ENCODE measurements at regions of chr12 and their contacts with region 1.

Region 1: DNA sequence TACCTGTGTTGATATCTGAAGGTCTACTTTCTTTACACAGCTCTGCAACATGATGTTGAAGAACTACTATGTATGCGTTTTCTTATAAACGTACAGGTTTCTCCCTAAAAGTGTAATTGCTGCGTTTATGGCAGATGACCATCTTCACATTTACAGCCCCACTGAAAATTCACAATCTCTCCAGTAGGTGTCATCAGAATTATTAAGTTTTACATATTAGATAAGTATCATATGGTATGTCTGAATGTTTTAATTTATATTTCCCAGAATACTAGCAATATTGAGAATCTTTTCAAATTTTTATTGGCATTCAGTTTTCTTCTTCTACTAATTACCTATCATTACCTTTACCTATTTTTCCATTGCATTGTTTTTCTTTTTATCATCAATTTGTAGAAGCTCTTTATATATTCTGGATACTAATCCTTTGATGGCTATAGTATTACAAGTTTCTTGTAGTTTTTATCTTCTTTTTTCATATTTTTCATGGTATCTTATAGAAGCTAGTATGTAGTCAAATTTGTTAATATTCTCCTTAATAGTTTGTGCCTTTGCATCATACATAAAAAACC is 123.5 kb downstream of the CAPZA3 start:
- DNase-seq: peak; percentile 26
- H3K4me3 ChIP-seq: no peak overlapping the region
- H3K27ac ChIP-seq: no peak overlapping the region
- H3K4me1 ChIP-seq: peaks cover 15% of the 10 kb centered on the region
- H3K27me3 ChIP-seq: no peaks in the 10 kb centered on the region
- CTCF ChIP-seq: peak; percentile 56 to 76

Region 2: DNA sequence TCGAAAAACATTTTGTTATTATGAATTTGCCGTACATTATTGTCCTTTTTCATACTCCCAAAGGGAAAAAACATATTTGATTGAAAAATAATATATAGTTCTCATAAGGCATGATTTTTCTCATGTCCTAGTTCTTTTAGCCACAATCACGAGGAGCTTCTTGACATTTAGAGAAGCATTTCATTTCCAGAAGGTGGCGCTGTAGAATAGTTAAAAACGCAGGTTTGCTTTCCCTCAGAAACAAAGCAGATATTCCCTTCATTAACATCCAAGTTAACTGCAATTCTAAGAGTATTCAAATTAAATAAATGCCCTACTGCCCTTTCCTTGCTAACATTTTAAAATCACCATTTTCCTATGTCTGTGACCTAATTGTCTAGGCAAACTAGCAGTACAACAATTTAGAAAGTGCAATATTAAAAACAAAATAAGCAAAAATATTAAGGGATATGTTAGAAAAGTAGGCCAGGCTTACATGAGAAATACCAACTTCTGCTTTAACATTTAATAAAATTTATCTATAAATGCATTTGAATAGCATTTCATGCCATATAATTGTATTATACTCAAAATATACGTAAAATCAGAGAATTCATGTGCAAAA is 611.0 kb before region 1 on chr12:
- CTCF ChIA-PET with region 1: no interaction called
- dilution Hi-C with region 1: no loop called
- in situ Hi-C with region 1: loop called in 1 of 2 experiments (anchors 25 kb)
- intact Hi-C with region 1: loop called (anchors 10 kb)
- DNase-seq: peak; percentile 58
- H3K4me3 ChIP-seq: no peak overlapping the region
- H3K27ac ChIP-seq: no peak overlapping the region
- H3K4me1 ChIP-seq: peaks cover 4% of the 10 kb centered on the region
- H3K27me3 ChIP-seq: no peaks in the 10 kb centered on the region
- CTCF ChIP-seq: peak; percentile 70 to 72

Region 3: GRCh38 chr12:18683327-18684013 is 177.9 kb before region 1 on chr12:
- CTCF ChIA-PET with region 1: no interaction called
- dilution Hi-C with region 1: no loop called
- in situ Hi-C with region 1: no loop called
- intact Hi-C with region 1: no loop called
- DNase-seq: peak; percentile 77
- H3K4me3 ChIP-seq: no peak overlapping the region
- H3K27ac ChIP-seq: peak overlapping the region; percentile 77
- H3K4me1 ChIP-seq: peaks cover 12% of the 10 kb centered on the region
- H3K27me3 ChIP-seq: no peaks in the 10 kb centered on the region
- CTCF ChIP-seq: no peak

Region 4: DNA sequence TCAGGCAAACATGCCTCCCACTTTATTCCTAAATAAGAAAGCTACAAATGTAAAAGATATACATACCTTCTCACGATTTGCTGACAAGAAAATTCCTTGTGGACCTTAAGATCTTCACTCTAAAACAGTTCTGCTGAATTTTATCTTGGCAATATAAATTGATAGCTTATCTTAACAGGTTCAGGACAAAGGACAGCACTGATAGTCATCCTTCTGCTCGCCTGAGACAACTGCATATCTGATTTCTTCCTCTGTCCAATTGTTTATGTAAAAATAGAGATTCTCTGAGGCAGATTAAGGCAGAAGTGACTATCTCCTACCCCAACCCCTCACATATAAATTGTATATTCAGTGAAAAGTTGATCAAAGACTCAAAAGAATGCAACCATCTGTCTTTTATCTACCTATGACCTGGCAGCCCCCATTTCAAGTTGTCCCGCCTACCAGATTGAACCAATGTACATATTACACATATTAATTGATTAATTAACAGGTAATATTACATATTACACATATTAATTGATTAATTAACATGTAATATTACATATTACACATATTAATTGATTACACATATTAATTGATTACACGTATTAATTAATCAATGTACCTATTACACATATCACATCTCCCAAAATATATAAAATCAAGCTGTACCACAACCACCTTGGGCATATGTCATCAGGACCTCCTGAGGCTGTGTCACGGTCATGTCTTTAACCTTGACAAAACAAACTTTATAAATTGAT is 78.4 kb before region 1 on chr12:
- CTCF ChIA-PET with region 1: no interaction called
- dilution Hi-C with region 1: no loop called
- in situ Hi-C with region 1: no loop called
- intact Hi-C with region 1: no loop called
- DNase-seq: no peak
- H3K4me3 ChIP-seq: no peak overlapping the region
- H3K27ac ChIP-seq: no peak overlapping the region
- H3K4me1 ChIP-seq: no peaks in the 10 kb centered on the region
- H3K27me3 ChIP-seq: no peaks in the 10 kb centered on the region
- CTCF ChIP-seq: no peak

Region 5: GRCh38 chr12:18895540-18896325 is 34.4 kb after region 1 on chr12:
- CTCF ChIA-PET with region 1: no interaction called
- dilution Hi-C with region 1: no loop called
- in situ Hi-C with region 1: no loop called
- intact Hi-C with region 1: no loop called
- DNase-seq: no peak
- H3K4me3 ChIP-seq: no peak overlapping the region
- H3K27ac ChIP-seq: no peak overlapping the region
- H3K4me1 ChIP-seq: no peaks in the 10 kb centered on the region
- H3K27me3 ChIP-seq: no peaks in the 10 kb centered on the region
- CTCF ChIP-seq: no peak

Region 6: DNA sequence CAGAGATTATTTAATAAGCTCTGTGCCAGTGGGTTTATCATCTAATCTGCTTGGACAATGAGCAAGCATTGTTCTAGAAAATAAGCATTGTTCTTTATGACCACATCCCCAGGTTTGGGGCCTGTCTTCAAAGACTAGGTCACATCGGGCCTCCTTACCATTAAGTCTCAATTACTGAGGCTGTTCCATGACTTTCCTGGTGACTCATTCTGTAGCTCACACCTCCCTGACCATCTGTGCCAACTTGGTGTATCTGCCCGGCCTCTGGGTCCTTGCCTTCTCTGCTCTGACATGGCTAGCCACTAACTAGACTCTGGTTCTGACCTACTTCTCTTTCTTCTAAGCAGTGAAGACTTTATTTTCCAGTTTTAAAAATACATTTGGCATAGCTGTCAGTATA is 223.7 kb after region 1 on chr12:
- CTCF ChIA-PET with region 1: no interaction called
- dilution Hi-C with region 1: no loop called
- in situ Hi-C with region 1: no loop called
- intact Hi-C with region 1: no loop called
- DNase-seq: peak; percentile 51
- H3K4me3 ChIP-seq: no peak overlapping the region
- H3K27ac ChIP-seq: no peak overlapping the region
- H3K4me1 ChIP-seq: peaks cover 8% of the 10 kb centered on the region
- H3K27me3 ChIP-seq: no peaks in the 10 kb centered on the region
- CTCF ChIP-seq: no peak

Region 7: DNA sequence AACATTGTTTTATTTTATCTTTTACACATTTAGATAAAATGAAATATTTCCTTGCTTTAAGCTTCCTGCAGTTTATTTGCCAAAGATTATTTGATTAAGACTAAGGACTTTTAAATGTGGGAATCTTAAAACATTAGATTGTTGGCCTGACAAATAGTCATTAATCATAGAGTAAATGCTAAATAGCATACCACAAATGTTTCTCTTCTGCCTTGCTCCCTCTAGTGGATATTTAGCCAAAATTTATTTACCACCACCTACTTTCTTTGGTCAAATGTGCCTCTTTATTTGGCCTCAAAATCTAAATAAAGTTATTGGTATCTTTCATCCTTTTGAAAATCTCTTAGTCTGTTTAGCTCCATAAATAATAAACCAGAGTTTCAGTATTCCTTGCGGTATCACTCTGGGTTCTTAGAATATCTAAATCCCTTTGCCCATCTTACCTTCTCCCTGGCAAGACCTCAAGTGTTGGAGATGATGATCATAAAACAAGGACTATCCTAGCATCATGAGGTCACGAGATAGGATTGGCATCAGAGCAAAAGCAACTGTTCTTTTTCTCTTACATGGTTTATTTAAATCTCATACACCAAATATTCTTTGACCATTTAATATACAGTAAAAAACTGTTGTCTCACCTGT is 427.4 kb after region 1 on chr12:
- CTCF ChIA-PET with region 1: no interaction called
- dilution Hi-C with region 1: no loop called
- in situ Hi-C with region 1: loop called in 1 of 2 experiments (anchors 25 kb)
- intact Hi-C with region 1: loop called (anchors 2 kb)
- DNase-seq: peak; percentile 23
- H3K4me3 ChIP-seq: no peak overlapping the region
- H3K27ac ChIP-seq: no peak overlapping the region
- H3K4me1 ChIP-seq: no peaks in the 10 kb centered on the region
- H3K27me3 ChIP-seq: no peaks in the 10 kb centered on the region
- CTCF ChIP-seq: peak; percentile 56 to 63

Measured in mammary epithelial cell (primary cell).